Heart left ventricle (tissue), 16 donors: ENCODE measurements at regions of chr5 and their contacts with region 1.

Region 1: DNA sequence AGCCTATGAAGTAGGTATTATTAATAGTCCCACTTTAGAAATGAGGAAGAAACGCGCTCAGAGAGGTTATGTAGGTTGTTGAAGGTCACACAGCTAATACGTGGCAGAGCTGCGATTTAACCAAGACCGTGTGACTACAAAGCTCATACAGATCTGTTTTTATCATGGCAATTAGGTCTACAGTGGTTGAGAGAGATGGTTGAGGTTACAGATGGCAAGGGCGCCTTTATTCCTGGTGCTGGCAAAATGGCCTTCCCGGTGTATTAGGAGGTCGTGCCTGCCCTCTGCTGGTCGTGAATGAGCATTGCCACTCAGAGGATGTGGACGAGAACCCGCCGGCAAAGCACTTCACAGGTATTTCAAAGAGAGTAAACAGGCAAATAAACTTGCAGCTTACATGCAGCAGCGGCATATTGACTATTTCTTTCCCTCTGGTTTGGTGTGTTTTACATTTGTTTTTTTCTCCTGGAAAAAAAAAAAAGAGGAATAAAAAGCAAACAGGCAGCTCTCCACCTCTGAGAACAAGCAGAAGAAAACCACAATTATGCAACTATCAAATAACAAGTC is 65.3 kb upstream of the EGFLAM start:
- DNase-seq: peak; percentile 50 to 71 (median 58)
- ATAC-seq: peak in 3 of 4 donors; percentile 78 to 81 (median 81)
- H3K4me3 ChIP-seq: no peak overlapping the region
- H3K27ac ChIP-seq: no peak overlapping the region
- H3K4me1 ChIP-seq: no peaks in the 10 kb centered on the region
- H3K27me3 ChIP-seq: peaks cover 0 to 20% (median 3%) of the 10 kb centered on the region in 9 donors
- CTCF ChIP-seq: peak; percentile 76 to 92 (median 84)
- POLR2A ChIP-seq: no peak

Region 2: GRCh38 chr5:37412515-37413277 is 780.4 kb before region 1 on chr5:
- intact Hi-C with region 1: loop called in 8 of 10 experiments (anchors 2 to 10 kb)
- DNase-seq: peak in 2 of 5 donors; percentile 34 to 40
- ATAC-seq: peak; percentile 61 to 78 (median 76)
- H3K4me3 ChIP-seq: no peak overlapping the region
- H3K27ac ChIP-seq: no peak overlapping the region
- H3K4me1 ChIP-seq: no peaks in the 10 kb centered on the region
- H3K27me3 ChIP-seq: no peaks in the 10 kb centered on the region
- CTCF ChIP-seq: peak; percentile 59 to 89 (median 80)
- POLR2A ChIP-seq: no peak

Region 3: DNA sequence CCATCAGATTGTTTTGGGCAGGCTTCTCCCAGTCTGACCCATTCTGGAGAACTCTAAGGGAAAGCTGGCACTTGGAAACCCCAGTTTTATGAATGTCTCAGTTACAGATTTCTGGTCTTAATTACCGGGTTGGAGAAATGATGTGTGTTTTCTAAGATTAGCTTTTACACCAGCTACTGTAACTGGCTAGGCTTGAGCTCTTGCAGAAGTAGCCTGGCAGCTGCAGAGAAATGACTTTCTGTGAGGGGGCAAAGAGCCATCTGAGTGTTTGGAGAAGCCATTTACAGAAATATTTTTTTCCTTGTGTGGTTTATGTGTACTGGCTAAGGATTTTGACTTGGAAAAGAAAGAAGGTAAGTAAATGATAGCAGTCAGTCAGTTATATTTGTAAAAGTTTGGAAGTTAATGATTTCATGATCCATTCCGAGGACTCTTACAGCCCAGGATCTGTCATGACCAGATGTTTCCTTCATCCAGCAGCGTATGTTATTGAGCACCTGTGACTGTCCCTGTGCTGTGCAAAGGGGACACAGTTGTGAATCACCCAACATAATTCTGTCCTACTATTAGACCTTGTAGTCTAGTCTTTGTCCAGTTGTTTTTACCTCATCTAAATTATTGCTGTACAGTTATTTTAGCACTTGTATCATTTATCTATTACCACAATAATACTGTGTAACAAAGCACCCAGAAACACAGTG is 299.5 kb before region 1 on chr5:
- intact Hi-C with region 1: no loop called
- DNase-seq: no peak
- ATAC-seq: peak in 1 of 4 donors; percentile 16
- H3K4me3 ChIP-seq: no peak overlapping the region
- H3K27ac ChIP-seq: no peak overlapping the region
- H3K4me1 ChIP-seq: peaks cover 0 to 3% (median 0%) of the 10 kb centered on the region in 12 donors
- H3K27me3 ChIP-seq: no peaks in the 10 kb centered on the region
- CTCF ChIP-seq: no peak
- POLR2A ChIP-seq: no peak

Region 4: DNA sequence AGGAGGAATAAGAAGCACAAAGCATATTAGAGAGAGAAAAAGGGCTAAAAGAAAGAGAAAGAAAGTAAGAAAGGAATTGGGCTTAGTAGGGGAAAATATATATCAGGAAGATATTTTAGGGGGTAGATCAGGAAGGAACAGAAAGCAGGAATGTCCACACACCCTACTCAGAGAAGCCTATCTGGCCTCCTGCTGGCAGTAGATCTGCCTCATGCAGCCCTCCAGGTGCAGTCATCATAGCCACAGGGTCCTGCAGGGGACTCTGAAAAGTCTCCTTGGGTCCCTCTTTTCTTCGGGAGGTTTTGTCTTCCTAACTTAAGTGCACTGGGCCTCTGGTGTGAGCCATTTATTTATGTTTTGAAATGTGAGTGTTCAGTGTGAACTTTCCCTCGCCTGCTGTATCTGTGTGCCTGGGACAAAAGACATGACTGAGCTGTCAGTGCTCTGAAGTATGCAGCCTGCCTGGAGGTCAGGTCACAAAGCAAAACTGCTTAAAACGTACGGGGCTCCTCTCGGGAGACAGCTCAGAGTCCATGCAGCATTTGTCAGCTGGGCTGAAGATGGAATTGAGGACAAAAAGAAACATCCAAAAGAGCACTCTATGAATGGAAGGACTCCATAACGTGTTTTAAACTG is 201.7 kb before region 1 on chr5:
- intact Hi-C with region 1: no loop called
- DNase-seq: peak in 1 of 5 donors; percentile 26
- ATAC-seq: peak; percentile 70 to 79 (median 75)
- H3K4me3 ChIP-seq: no peak overlapping the region
- H3K27ac ChIP-seq: peak overlapping the region in 5 of 12 donors; percentile 44 to 56 (median 50)
- H3K4me1 ChIP-seq: peaks cover 0 to 27% (median 10%) of the 10 kb centered on the region in 12 donors
- H3K27me3 ChIP-seq: no peaks in the 10 kb centered on the region
- CTCF ChIP-seq: no peak
- POLR2A ChIP-seq: no peak

Region 5: GRCh38 chr5:38029482-38030001 is 163.6 kb before region 1 on chr5:
- intact Hi-C with region 1: loop called in 1 of 10 experiments (anchors 10 kb)
- DNase-seq: no peak
- ATAC-seq: no peak
- H3K4me3 ChIP-seq: no peak overlapping the region
- H3K27ac ChIP-seq: no peak overlapping the region
- H3K4me1 ChIP-seq: no peaks in the 10 kb centered on the region
- H3K27me3 ChIP-seq: no peaks in the 10 kb centered on the region
- CTCF ChIP-seq: no peak
- POLR2A ChIP-seq: no peak